HCT116 (cell line): ENCODE measurements at regions of chr17 and their contacts with region 1.

Region 1: DNA sequence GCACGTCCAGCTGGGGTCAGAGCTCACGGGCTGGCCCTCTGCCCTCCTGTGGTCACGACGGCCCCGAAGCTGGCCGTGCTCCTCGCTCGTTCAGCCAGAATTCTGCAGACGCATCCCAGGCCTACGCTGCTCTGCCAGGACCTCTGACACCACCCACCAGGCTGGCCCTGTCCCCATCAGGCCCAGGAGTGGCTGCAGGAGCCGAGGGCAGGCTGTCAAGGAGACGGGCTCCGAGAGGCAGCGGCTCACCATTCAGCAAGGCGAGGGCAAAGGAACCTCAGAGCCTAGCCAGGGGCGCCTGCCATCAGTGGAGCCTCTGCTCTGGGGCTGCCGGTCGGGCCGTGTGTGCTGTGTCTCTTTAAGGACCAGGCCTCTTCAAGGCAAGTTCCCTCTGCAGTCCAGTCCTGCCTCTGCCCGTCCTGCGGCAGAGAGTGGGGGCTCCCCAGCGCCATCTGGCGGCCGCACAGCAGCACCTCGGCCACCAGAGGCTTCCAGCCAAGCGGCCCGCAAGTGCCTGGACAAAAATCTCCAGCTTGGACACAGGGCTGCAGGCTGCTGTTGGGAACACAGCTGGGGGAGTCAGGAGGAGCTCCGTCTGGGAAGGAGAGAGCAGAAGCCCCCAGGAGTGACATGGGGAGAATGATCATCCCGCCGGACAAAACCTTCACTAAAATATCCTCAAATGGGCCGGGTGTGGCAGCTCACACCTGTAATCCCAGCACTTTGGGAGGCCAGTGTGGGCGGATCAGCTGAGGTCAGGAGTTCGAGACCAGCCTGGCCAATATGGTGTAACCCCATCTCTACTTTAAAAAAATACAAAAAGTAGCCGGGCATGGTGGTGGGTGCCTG is 7.4 kb upstream of the ABR start:
- DNase-seq: peak; percentile 72
- ATAC-seq: peak; percentile 96
- H3K4me3 ChIP-seq: 0 out of 4 replicates have a peak overlapping the region, but pooled peaks of 1 of the 2 experiments have one; percentile 5
- H3K27ac ChIP-seq: no peak overlapping the region
- H3K4me1 ChIP-seq: peaks cover 7 to 36% of the 10 kb centered on the region in 2 experiments; a peak in 3 of 4 replicates
- H3K27me3 ChIP-seq: peaks cover 5% of the 10 kb centered on the region; the same call in 1 of the 2 replicates
- CTCF ChIP-seq: peak; percentile 90 to 99 (median 97)
- POLR2A ChIP-seq: no peak
- RAD21 ChIP-seq: peak; percentile 85

Region 2: DNA sequence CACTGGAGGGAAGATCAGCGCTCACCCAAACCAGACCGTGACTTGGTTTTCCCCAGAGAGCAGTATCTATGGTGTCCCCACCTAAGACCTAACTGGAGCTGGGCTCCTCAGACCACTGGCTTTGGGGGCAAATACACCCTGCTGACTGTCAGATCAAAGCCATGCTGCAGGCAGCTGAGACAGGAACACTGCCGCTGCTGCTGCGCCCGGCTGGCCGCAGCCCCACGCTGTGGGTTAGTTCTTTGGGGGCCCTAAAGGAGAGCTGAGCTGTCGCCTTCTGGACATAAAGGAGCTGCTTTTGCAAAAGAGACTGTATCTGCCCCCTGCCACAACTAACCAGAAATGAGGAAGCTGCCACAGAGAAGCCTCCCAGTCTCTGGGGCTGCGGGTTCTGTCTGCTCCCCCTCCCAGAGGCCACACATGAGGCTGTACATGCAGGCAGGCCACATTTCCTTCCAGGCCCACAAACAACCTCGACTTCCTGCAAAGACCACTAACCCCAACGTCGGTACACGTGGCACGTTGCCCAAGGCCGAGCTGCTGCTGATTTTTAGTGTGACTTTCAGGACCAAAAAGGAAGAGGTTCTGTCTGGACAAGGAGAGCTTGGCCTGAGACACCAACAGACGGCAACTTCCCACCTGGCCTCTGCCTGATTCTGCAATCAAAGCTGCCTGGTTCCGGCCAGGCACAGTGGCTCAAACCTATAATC is 10.8 kb after region 1 on chr17:
- CTCF ChIA-PET with region 1: interaction called, 13 read pairs
- POLR2A ChIA-PET with region 1: no interaction called
- RAD21 ChIA-PET with region 1: no interaction called
- intact Hi-C with region 1: no loop called
- DNase-seq: no peak
- ATAC-seq: no peak
- H3K4me3 ChIP-seq: no peak overlapping the region
- H3K27ac ChIP-seq: no peak overlapping the region
- H3K4me1 ChIP-seq: peaks cover 0 to 5% of the 10 kb centered on the region in 2 experiments; a peak in 2 of 4 replicates
- H3K27me3 ChIP-seq: no peaks in the 10 kb centered on the region
- CTCF ChIP-seq: no peak
- POLR2A ChIP-seq: no peak
- RAD21 ChIP-seq: no peak